PC-3 (cell line): ENCODE measurements at regions of chr22 and their contacts with region 1.

Region 1: DNA sequence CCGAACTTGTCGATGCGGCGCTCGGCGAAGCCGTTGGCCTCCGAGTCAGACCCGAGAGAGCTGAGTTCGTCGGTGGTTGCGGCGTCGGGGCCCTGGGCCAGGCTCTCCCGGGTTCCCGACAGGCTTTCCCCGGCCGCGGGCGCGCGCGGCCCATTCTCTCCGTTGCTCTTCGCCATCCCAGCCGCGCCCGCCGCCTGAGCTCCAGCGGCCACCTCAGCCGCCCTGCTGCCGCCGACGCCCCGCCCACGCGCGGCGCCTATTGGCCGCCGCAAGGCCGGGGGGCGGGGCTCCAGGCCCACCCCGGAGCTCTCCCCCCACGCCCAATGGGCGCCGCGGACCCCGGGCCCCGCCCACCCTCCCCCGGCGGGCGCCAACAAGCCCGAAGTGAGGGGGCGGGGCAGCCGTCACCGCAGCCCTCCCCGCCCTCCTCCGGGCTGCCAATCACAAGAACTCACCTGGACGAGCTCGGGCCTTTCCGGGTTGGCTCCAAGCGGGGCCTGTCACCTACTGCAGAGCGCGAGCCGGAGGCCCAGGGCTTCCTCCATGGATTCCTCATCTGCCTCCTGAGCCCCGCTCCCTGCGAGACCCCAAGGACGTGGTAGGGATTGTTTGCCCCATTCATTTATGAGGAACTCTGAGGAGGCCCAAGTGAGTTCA is at the start of gene TBC1D10A:
- DNase-seq: peak; percentile 92
- ATAC-seq: peak; percentile 88
- H3K4me3 ChIP-seq: peak within 1 kb of the TSS; percentile 79
- H3K27ac ChIP-seq: peak within 1 kb of the TSS; percentile 23
- H3K4me1 ChIP-seq: peaks cover 28% of the 10 kb centered on the region
- H3K27me3 ChIP-seq: no peaks in the 10 kb centered on the region
- CTCF ChIP-seq: no peak
- total RNA-seq, gene TBC1D10A: 12.6 and 19.5 TPM in 2 replicates

Region 2: DNA sequence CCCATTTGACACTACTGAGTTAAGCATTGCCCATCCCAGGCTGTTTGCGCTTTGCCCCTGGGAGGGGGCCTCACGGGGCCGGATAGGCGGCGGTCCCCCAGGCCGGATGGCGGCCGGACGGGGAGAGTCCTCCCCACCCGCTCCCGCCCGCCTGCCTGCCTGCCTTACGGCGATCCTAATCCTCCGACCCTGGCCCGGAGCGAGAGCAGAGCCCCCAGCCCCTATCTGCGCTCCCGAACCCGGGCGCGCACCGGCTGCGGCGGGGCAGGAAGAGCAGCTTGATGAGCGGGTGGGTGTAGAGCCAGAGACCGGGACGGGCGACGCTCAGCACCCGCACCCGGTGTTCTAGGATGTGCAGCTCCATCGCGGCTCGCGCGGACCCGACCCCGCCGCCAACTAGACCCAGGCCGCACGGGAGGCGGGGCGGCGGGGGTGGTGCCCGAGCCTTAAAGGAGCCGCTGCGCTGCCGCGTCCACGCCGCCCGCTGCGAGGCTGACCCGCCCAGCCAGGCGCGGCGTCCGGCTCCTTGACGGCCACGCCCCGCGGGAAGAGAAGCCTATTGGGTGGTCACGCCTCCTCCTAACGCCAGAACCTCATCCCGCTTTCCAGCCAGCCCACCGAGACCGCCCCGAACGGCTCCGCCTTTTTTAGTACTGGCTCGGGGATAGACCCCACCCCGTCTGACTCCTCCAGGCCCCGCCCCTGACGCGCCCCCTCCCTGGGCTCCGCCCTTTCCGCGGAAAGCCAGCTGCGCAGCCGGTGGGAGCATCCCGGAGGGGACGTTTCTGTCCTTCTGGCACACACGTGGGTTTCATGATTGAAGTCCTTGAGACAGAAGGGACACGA is 37.5 kb before region 1 on chr22 and contains the start of gene CASTOR1:
- CTCF ChIA-PET with region 1: interaction called, 33 read pairs
- POLR2A ChIA-PET with region 1: interaction called, 8 read pairs
- intact Hi-C with region 1: loop called (anchors 5 kb)
- DNase-seq: peak; percentile 95
- ATAC-seq: peak; percentile 77
- H3K4me3 ChIP-seq: peak within 1 kb of the TSS; percentile 79
- H3K27ac ChIP-seq: peak within 1 kb of the TSS; percentile 37; the same call in 1 of the 2 replicates
- H3K4me1 ChIP-seq: peaks cover 25% of the 10 kb centered on the region
- H3K27me3 ChIP-seq: no peaks in the 10 kb centered on the region
- CTCF ChIP-seq: no peak
- total RNA-seq, gene CASTOR1: 4.2 and 6.1 TPM in 2 replicates

Region 3: GRCh38 chr22:30362651-30363281 is 35.9 kb after region 1 on chr22:
- CTCF ChIA-PET with region 1: no interaction called
- POLR2A ChIA-PET with region 1: interaction called, 13 read pairs
- intact Hi-C with region 1: no loop called
- DNase-seq: no peak
- ATAC-seq: no peak
- H3K4me3 ChIP-seq: no peak overlapping the region
- H3K27ac ChIP-seq: no peak overlapping the region
- H3K4me1 ChIP-seq: no peaks in the 10 kb centered on the region
- H3K27me3 ChIP-seq: no peaks in the 10 kb centered on the region
- CTCF ChIP-seq: no peak